CD14-positive monocyte (primary cell): ENCODE measurements at regions of chr11 and their contacts with region 1.

Region 1: DNA sequence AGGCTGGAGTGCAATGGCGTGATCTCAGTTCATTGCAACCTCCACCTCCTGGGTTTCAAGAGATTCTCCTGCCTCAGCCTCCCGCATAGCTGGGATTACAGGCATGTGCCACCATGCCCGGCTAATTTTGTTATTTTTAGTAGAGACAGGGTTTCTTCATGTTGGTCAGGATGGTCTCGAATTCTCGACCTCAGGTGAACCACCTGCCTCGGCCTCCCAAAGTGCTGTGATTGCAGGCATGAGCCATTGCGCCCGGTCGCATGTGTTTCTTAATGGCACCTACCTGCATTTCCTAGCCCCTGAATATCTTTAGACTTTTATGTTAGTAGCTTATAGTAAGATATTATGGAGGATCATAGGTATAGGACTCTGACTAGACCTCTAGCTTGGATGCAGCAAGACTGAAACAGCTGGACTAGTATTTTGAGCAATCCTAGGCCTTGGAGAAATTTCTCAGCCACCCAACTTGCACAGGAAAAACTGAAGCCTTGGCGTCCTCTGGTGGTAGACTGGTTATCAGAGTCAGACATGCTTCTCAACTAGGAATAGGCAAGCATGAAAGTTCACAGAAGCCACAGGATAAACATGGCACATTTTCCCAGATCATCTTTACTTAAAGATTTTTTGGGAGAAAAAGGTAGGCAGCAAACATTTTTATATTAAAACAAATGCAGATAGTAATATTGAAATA is 22.7 kb upstream of the C1QTNF4 start:
- DNase-seq: peak in 1 of 3 donors; percentile 3
- H3K4me3 ChIP-seq: no peak overlapping the region
- H3K4me3 Mint-ChIP-seq: no peak overlapping the region
- H3K27ac ChIP-seq: no peak overlapping the region
- H3K27ac Mint-ChIP-seq: peak overlapping the region in 1 of 7 donors; percentile 25
- H3K4me1 ChIP-seq: peaks cover 2 to 3% of the 10 kb centered on the region in 2 donors
- H3K4me1 Mint-ChIP-seq: peaks cover 2% of the 10 kb centered on the region
- H3K27me3 ChIP-seq: no peaks in the 10 kb centered on the region
- H3K27me3 Mint-ChIP-seq: no peaks in the 10 kb centered on the region
- CTCF ChIP-seq: peak; percentile 56

Region 2: GRCh38 chr11:47305734-47306483 is 311.0 kb before region 1 on chr11:
- intact Hi-C with region 1: loop called in 1 of 2 experiments (anchors 10 kb)
- DNase-seq: no peak
- H3K4me3 ChIP-seq: no peak overlapping the region
- H3K4me3 Mint-ChIP-seq: no peak overlapping the region
- H3K27ac ChIP-seq: peak overlapping the region in 1 of 2 donors; percentile 8
- H3K27ac Mint-ChIP-seq: peak overlapping the region in 1 of 7 donors; percentile 16
- H3K4me1 ChIP-seq: no peaks in the 10 kb centered on the region
- H3K4me1 Mint-ChIP-seq: no peaks in the 10 kb centered on the region
- H3K27me3 ChIP-seq: no peaks in the 10 kb centered on the region
- H3K27me3 Mint-ChIP-seq: peaks cover 0 to 6% (median 2%) of the 10 kb centered on the region in 3 donors
- CTCF ChIP-seq: no peak

Region 3: GRCh38 chr11:47731475-47731874 is 114.6 kb after region 1 on chr11:
- intact Hi-C with region 1: loop called in 1 of 2 experiments (anchors 10 kb)
- DNase-seq: no peak
- H3K4me3 ChIP-seq: no peak overlapping the region
- H3K4me3 Mint-ChIP-seq: no peak overlapping the region
- H3K27ac ChIP-seq: no peak overlapping the region
- H3K27ac Mint-ChIP-seq: no peak overlapping the region
- H3K4me1 ChIP-seq: no peaks in the 10 kb centered on the region
- H3K4me1 Mint-ChIP-seq: no peaks in the 10 kb centered on the region
- H3K27me3 ChIP-seq: no peaks in the 10 kb centered on the region
- H3K27me3 Mint-ChIP-seq: no peaks in the 10 kb centered on the region
- CTCF ChIP-seq: no peak